ENCODE measurements at regions of chr2 and their contacts with region 1.

Region 1: DNA sequence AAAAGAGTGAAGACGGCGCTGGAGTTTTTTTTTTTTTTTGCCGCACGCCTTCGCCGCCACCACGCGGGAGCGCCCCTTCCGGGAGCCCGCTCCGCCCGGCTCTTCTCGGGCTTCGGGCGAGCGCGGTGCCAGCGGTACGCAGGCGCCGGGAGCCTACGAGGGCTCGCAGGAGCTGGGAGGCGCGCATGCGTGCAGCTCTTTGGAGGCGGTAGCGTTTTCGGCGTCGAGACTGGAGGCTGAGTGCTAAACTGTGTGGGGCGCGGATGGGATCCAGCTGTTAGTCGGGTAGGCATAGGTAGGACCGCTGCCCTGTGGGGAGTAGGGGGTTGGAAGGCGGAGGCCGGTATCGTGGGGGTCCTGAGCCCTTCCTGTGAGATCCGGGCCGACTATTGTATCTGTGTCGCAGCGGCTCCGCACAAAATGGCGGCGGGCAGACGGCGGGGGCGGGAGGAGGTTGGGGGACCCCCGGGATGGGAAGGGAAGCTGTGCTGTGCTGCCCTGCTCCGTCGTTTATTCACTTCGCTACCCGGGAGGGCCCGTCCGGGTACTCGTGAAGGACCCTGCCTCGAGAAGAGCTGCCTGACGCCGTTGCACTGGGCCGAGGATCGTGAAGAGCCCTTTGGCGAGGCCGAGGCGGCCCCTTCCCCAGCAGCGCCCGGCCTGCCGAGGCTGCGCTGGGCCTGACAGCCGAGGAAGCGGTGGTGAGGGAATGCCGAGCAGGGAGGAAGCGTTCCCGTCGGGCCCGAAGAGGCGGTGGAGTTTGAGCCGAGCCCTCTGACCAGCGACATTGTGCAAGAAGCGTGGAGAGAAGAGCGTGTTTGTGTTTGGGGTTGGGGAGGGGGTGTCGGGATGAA is at the start of gene ZNF638:
- DNase-seq: peak; percentile 71
- ATAC-seq: peak; percentile 98
- H3K4me3 ChIP-seq: peak within 1 kb of the TSS; percentile 77
- H3K27ac ChIP-seq: peak within 1 kb of the TSS; percentile 80
- H3K4me1 ChIP-seq: no peaks in the 10 kb centered on the region
- H3K27me3 ChIP-seq: no peaks in the 10 kb centered on the region
- CTCF ChIP-seq: peak; percentile 74 to 84 (median 75)
- EP300 ChIP-seq: no peak
- POLR2A ChIP-seq: peak; percentile 94
- RAD21 ChIP-seq: peak; percentile 32; the same call in 1 of the 2 replicates
- polyA plus RNA-seq, gene ZNF638: 37.6 to 40.5 TPM

Region 2: DNA sequence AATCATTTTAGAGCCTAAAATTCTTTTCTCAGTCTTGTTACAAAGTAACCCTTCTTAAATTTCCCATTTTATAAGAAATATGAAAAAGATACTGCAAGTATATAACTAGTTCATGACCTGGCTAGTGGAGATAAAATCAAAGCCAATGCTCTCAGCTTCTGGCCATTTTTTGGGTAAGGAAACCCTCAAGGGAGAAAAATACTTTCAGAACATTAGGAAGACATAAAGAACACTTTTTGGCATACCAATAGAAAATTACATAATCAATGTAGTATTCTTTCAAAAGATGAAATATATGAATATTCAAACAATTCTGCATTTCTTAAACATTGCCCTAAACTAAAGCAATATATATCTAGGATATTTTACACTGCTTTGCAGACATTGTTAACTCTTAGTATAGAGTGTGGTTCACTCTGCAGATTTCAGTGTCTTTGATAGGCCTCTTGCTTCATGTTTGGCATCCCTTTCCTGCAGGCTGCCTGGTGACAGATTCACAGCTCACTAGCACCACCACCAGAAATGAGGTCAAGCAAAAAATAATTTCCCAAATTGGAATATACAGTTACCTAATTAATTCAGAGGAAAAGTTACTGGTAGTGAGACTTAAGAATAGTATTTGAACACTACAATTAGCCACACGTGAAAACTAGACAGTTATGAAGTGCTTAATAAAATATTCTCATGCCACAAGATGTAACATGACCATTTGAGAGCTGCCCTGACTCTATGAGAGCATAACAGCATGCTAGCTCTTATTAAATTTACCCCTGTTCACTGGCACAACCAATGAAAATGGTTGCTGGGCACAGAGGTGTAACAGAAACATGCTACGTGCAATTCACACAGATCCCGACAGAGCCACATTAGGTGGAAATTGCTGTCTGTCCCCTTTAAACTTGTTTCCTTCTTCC is 140.9 kb before region 1 on chr2:
- CTCF ChIA-PET with region 1: no interaction called
- POLR2A ChIA-PET with region 1: no interaction called
- RAD21 ChIA-PET with region 1: no interaction called
- SMC1A ChIA-PET with region 1: no interaction called
- in situ Hi-C with region 1: no loop called
- intact Hi-C with region 1: no loop called
- DNase-seq: no peak
- ATAC-seq: no peak
- H3K4me3 ChIP-seq: no peak overlapping the region
- H3K27ac ChIP-seq: no peak overlapping the region
- H3K4me1 ChIP-seq: no peaks in the 10 kb centered on the region
- H3K27me3 ChIP-seq: no peaks in the 10 kb centered on the region
- CTCF ChIP-seq: peak in 1 of 3 experiments; percentile 18; a peak in 1 of 6 replicates
- EP300 ChIP-seq: no peak
- POLR2A ChIP-seq: no peak
- RAD21 ChIP-seq: peak; percentile 32; the same call in 1 of the 2 replicates

Region 3: GRCh38 chr2:71299507-71299906 is 32.3 kb before region 1 on chr2:
- CTCF ChIA-PET with region 1: interaction called, 41 read pairs
- POLR2A ChIA-PET with region 1: interaction called, 7 read pairs
- RAD21 ChIA-PET with region 1: interaction called, 19 read pairs
- SMC1A ChIA-PET with region 1: interaction called, 9 read pairs
- in situ Hi-C with region 1: no loop called
- intact Hi-C with region 1: no loop called
- DNase-seq: no peak
- ATAC-seq: peak; percentile 54
- H3K4me3 ChIP-seq: no peak overlapping the region
- H3K27ac ChIP-seq: no peak overlapping the region
- H3K4me1 ChIP-seq: no peaks in the 10 kb centered on the region
- H3K27me3 ChIP-seq: no peaks in the 10 kb centered on the region
- CTCF ChIP-seq: peak; percentile 65 to 68 (median 67); a peak in 5 of 6 replicates
- EP300 ChIP-seq: no peak
- POLR2A ChIP-seq: no peak
- RAD21 ChIP-seq: peak; percentile 72

Region 4: GRCh38 chr2:71348302-71348701 is 16.5 kb after region 1 on chr2:
- CTCF ChIA-PET with region 1: interaction called, 50 read pairs
- POLR2A ChIA-PET with region 1: interaction called, 10 read pairs
- RAD21 ChIA-PET with region 1: interaction called, 9 read pairs
- SMC1A ChIA-PET with region 1: interaction called, 20 read pairs
- in situ Hi-C with region 1: no loop called
- intact Hi-C with region 1: no loop called
- DNase-seq: no peak
- ATAC-seq: no peak
- H3K4me3 ChIP-seq: no peak overlapping the region
- H3K27ac ChIP-seq: no peak overlapping the region
- H3K4me1 ChIP-seq: no peaks in the 10 kb centered on the region
- H3K27me3 ChIP-seq: no peaks in the 10 kb centered on the region
- CTCF ChIP-seq: no peak
- EP300 ChIP-seq: no peak
- POLR2A ChIP-seq: no peak
- RAD21 ChIP-seq: no peak

Region 5: DNA sequence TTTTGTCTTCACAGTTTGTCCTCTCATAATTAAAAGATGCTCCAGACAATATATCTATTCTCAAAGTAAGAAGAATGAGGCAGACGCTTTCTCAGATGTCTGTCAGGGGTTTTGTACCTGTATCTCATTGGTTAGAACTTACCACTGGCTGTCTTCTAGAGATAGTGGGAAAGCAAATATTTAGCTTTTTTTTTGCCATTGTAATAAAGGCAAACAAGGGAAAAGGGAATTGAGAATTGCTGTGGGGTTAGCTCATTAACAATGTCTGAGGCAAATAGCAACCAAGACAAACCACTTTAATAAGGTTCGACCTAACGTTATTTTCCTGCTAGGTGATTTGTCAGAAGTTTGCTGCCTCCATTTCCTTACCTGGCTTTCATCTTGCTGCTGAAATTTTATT is 29.8 kb after region 1 on chr2:
- CTCF ChIA-PET with region 1: interaction called, 6 read pairs
- POLR2A ChIA-PET with region 1: interaction called, 6 read pairs
- RAD21 ChIA-PET with region 1: interaction called, 14 read pairs
- SMC1A ChIA-PET with region 1: interaction called, 10 read pairs
- in situ Hi-C with region 1: no loop called
- intact Hi-C with region 1: no loop called
- DNase-seq: peak; percentile 41
- ATAC-seq: peak; percentile 93
- H3K4me3 ChIP-seq: no peak overlapping the region
- H3K27ac ChIP-seq: no peak overlapping the region
- H3K4me1 ChIP-seq: no peaks in the 10 kb centered on the region
- H3K27me3 ChIP-seq: no peaks in the 10 kb centered on the region
- CTCF ChIP-seq: no peak
- EP300 ChIP-seq: peak; percentile 56 to 88; a peak in 3 of 4 replicates
- POLR2A ChIP-seq: no peak
- RAD21 ChIP-seq: no peak

Region 6: GRCh38 chr2:71417300-71418202 is 85.7 kb after region 1 on chr2:
- CTCF ChIA-PET with region 1: no interaction called
- POLR2A ChIA-PET with region 1: interaction called, 3 read pairs
- RAD21 ChIA-PET with region 1: interaction called, 11 read pairs
- SMC1A ChIA-PET with region 1: interaction called, 3 read pairs
- in situ Hi-C with region 1: no loop called
- intact Hi-C with region 1: no loop called
- DNase-seq: no peak
- ATAC-seq: peak; percentile 69
- H3K4me3 ChIP-seq: peak overlapping the region; percentile 61
- H3K27ac ChIP-seq: peak overlapping the region; percentile 56
- H3K4me1 ChIP-seq: no peaks in the 10 kb centered on the region
- H3K27me3 ChIP-seq: no peaks in the 10 kb centered on the region
- CTCF ChIP-seq: no peak
- EP300 ChIP-seq: no peak
- POLR2A ChIP-seq: no peak
- RAD21 ChIP-seq: no peak

Measured in GM12878 (cell line).